Activated CD4-positive, alpha-beta memory T cell treated with anti-CD3 and anti-CD28 coated beads, Interleukin-2, amount 10 ng/mL, durations not matched to agents 7 days and 5 days (primary cell): ENCODE measurements at regions of chr6 and their contacts with region 1.

Region 1: GRCh38 chr6:27608916-27609883 is 136.3 kb upstream of the ZNF184 start:
- DNase-seq: no peak
- H3K4me3 Mint-ChIP-seq: no peak overlapping the region
- H3K27ac Mint-ChIP-seq: no peak overlapping the region
- H3K4me1 Mint-ChIP-seq: peaks cover 14% of the 10 kb centered on the region
- H3K27me3 Mint-ChIP-seq: peaks cover 38% of the 10 kb centered on the region

Region 2: DNA sequence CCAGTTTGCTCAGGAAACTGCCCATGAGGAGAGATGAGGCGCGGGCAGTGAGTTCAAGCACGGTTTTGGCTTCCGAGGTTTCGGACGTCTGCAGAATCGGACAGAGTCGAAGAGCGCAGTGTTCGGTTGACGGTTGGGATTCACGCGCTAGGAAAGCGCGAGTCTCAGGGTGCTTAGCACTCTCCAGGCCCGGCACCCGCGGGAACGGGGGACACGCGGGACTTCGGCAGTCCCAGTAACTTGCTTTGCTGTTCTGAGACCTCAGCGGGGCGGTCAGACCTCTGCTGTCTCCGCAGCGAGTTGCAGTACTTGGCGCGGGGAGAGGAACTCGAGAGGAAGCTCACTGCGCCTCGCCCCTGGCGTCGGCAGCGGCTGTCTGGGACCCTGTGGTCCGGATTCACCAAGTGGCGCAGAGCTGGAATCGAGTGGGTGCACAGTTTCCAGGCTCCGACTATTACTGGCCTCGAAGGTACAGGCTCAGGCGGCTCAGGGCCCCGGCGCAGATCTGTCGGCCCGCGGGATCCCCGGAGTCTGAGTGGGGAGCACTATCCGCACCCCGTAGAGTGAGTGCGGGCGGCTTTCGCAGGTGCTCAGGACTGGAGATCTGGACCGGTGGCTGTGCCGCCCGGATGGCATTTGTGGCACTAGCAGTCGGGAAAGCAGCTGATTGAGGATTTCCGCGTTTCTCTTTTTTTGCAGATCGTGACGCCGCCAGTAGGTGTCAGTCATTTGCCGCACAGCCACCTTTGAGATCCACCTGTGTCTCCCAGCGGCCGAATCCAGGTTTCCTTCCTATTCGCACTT is 296.9 kb before region 1 on chr6 and contains the start of gene POM121L2:
- CTCF ChIA-PET with region 1: interaction called, 10 read pairs
- POLR2A ChIA-PET with region 1: no interaction called
- DNase-seq: peak; percentile 73
- H3K4me3 Mint-ChIP-seq: peak within 1 kb of the TSS; percentile 72
- H3K27ac Mint-ChIP-seq: no peak within 1 kb of the TSS
- H3K4me1 Mint-ChIP-seq: peaks cover 12% of the 10 kb centered on the region
- H3K27me3 Mint-ChIP-seq: peaks cover 75% of the 10 kb centered on the region
- total RNA-seq, gene POM121L2: not detected